ENCODE measurements at regions of chr6 and their contacts with region 1.

Region 1: DNA sequence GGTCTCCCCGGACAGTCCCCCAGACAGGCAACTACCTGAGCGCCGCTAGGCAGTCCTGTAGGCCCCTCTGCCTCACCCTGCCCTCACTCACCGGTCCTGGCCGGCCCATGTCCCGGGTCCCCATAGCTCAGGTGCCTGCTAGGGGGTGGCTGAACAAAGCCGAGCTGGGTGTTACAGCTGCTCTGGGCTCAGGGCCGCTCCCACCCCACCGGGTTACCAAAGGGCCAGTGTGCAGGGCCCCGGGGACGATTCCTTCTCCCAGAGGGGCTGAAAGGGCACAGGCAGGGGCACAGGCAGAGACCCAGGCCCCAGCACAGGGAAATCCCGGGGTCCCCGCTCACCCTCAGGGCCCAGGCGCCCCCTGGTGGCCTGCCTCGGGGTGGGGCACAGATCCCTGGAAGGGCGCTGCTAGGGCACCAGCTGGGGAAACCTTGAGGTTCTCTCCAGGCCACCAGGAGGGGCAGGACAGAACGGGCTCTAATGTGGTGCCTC is 118.4 kb downstream of the GRM4 start:
- DNase-seq: peak; percentile 29 to 84 (median 64)
- ATAC-seq: peak; percentile 66
- H3K4me3 ChIP-seq: no peak overlapping the region
- H3K4me3 Mint-ChIP-seq: no peak overlapping the region
- H3K27ac ChIP-seq: no peak overlapping the region
- H3K27ac Mint-ChIP-seq: no peak overlapping the region
- H3K4me1 ChIP-seq: no peaks in the 10 kb centered on the region
- H3K4me1 Mint-ChIP-seq: no peaks in the 10 kb centered on the region
- H3K27me3 ChIP-seq: no peaks in the 10 kb centered on the region
- H3K27me3 Mint-ChIP-seq: peaks cover 5% of the 10 kb centered on the region
- CTCF ChIP-seq: peak; percentile 82

Region 2: DNA sequence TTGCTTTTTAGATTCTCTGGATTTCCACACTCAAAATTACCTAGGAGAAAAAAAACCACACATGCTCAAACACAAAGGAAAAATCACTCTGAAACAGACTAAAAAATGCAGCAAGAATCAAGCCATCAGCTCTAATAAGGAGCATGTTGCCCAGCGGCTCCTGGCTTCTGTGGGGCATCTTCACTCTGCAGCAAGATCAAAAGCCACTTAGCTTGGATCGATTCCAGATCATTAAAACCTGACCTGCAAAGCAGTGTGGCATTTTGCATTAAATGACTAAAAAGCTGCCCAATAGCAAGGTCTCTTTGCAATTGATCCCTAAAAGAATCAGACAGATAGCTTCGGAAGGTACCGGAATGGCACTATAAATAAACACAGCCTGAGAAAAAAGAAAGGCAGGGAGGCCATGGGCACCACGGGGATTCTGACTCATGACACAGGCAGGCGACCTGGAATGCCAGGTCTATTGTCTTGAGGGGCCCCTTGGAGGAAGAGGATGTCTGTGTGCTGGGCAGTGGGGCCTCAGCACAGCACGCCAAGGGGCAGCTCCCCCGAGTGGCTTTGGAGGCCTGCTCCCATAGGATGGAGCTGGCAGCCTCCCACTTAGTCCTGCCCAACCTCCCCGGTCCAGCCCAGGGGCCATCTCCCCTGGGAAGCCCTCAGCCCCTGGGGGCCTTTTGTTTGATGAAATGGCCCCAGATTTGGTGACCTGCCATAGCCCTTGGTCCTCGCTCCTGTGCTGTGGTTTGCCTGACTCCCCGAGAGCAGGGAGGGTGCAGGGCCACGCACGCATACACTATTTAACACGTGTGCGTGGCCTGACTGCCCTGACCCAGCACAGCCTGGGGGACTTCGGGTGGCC is 246.1 kb before region 1 on chr6:
- CTCF ChIA-PET with region 1: interaction called, 21 read pairs
- POLR2A ChIA-PET with region 1: no interaction called
- intact Hi-C with region 1: loop called in 1 of 2 experiments (anchors 5 kb)
- DNase-seq: no peak
- ATAC-seq: no peak
- H3K4me3 ChIP-seq: no peak overlapping the region
- H3K4me3 Mint-ChIP-seq: no peak overlapping the region
- H3K27ac ChIP-seq: no peak overlapping the region
- H3K27ac Mint-ChIP-seq: no peak overlapping the region
- H3K4me1 ChIP-seq: peaks cover 19% of the 10 kb centered on the region
- H3K4me1 Mint-ChIP-seq: peaks cover 37% of the 10 kb centered on the region
- H3K27me3 ChIP-seq: no peaks in the 10 kb centered on the region
- H3K27me3 Mint-ChIP-seq: no peaks in the 10 kb centered on the region
- CTCF ChIP-seq: no peak

Region 3: DNA sequence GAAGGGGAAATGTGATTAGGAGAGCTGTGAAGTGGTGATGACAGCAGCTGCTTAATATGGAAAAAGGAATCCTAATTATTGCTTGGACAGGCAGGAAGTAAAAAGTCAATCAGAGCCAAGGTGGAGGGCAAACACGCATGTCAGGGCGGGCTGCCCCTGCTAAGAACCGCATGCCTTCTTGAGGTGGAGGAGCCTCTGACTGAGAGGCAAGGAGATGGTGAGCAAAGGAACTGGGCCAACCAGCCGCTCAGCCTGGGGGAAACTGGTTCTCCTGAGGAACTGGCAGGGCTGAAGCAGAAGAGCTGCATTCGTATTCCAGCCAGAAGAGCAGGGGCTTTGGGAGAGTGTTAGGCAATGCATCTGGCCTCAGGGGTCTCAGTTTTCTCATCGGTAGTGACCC is 210.6 kb before region 1 on chr6:
- CTCF ChIA-PET with region 1: no interaction called
- POLR2A ChIA-PET with region 1: no interaction called
- intact Hi-C with region 1: no loop called
- DNase-seq: no peak
- ATAC-seq: no peak
- H3K4me3 ChIP-seq: no peak overlapping the region
- H3K4me3 Mint-ChIP-seq: no peak overlapping the region
- H3K27ac ChIP-seq: no peak overlapping the region
- H3K27ac Mint-ChIP-seq: no peak overlapping the region
- H3K4me1 ChIP-seq: peaks cover 7% of the 10 kb centered on the region
- H3K4me1 Mint-ChIP-seq: peaks cover 7% of the 10 kb centered on the region
- H3K27me3 ChIP-seq: peaks cover 12 to 16% of the 10 kb centered on the region in 2 experiments
- H3K27me3 Mint-ChIP-seq: peaks cover 21% of the 10 kb centered on the region
- CTCF ChIP-seq: no peak

Region 4: DNA sequence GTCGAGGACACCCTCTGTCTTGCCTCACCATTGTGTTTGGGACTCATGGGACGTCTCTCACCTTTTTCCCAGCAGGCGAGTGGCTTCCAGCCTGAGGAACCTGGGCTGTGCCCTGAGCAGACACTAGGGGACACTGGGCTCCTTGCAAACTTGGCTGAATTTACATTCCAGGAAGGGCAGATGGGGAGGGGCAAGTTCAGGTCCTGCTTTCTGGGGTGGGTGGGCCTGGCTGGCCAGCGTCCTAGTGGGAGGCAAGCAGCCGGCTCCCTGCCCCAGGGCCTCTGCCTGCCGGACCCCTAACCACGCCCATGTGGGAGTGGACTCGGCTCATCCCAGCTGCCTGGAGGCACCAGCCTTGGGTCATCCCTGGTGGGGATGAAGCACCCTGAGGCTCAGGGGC is 175.5 kb before region 1 on chr6:
- CTCF ChIA-PET with region 1: interaction called, 52 read pairs
- POLR2A ChIA-PET with region 1: no interaction called
- intact Hi-C with region 1: loop called in 1 of 2 experiments (anchors 1 kb)
- DNase-seq: peak in 4 of 9 experiments; percentile 26 to 58 (median 41)
- ATAC-seq: no peak
- H3K4me3 ChIP-seq: no peak overlapping the region
- H3K4me3 Mint-ChIP-seq: no peak overlapping the region
- H3K27ac ChIP-seq: no peak overlapping the region
- H3K27ac Mint-ChIP-seq: no peak overlapping the region
- H3K4me1 ChIP-seq: peaks cover 24% of the 10 kb centered on the region
- H3K4me1 Mint-ChIP-seq: peaks cover 20% of the 10 kb centered on the region
- H3K27me3 ChIP-seq: peaks cover 0 to 17% of the 10 kb centered on the region in 2 experiments
- H3K27me3 Mint-ChIP-seq: peaks cover 17% of the 10 kb centered on the region
- CTCF ChIP-seq: no peak

Region 5: GRCh38 chr6:33860706-33861474 is 166.6 kb before region 1 on chr6:
- CTCF ChIA-PET with region 1: interaction called, 21 read pairs
- POLR2A ChIA-PET with region 1: interaction called, 3 read pairs
- intact Hi-C with region 1: no loop called
- DNase-seq: peak in 5 of 9 experiments; percentile 16 to 62 (median 41)
- ATAC-seq: peak; percentile 27
- H3K4me3 ChIP-seq: no peak overlapping the region
- H3K4me3 Mint-ChIP-seq: peak overlapping the region; percentile 21
- H3K27ac ChIP-seq: no peak overlapping the region
- H3K27ac Mint-ChIP-seq: no peak overlapping the region
- H3K4me1 ChIP-seq: peaks cover 57% of the 10 kb centered on the region
- H3K4me1 Mint-ChIP-seq: peaks cover 71% of the 10 kb centered on the region
- H3K27me3 ChIP-seq: peaks cover 0 to 23% of the 10 kb centered on the region in 2 experiments
- H3K27me3 Mint-ChIP-seq: peaks cover 8% of the 10 kb centered on the region
- CTCF ChIP-seq: no peak

Region 6: GRCh38 chr6:34791701-34792235 is 764.3 kb after region 1 on chr6 and contains the start of gene BLTP3A:
- CTCF ChIA-PET with region 1: no interaction called
- POLR2A ChIA-PET with region 1: no interaction called
- intact Hi-C with region 1: no loop called
- DNase-seq: peak; percentile 48 to 91 (median 71)
- ATAC-seq: peak; percentile 90
- H3K4me3 ChIP-seq: peak within 1 kb of the TSS; percentile 75 to 95
- H3K4me3 Mint-ChIP-seq: peak within 1 kb of the TSS; percentile 99
- H3K27ac ChIP-seq: peak within 1 kb of the TSS; percentile 75 to 79
- H3K27ac Mint-ChIP-seq: peak within 1 kb of the TSS; percentile 94
- H3K4me1 ChIP-seq: peaks cover 12% of the 10 kb centered on the region
- H3K4me1 Mint-ChIP-seq: peaks cover 29% of the 10 kb centered on the region
- H3K27me3 ChIP-seq: no peaks in the 10 kb centered on the region
- H3K27me3 Mint-ChIP-seq: no peaks in the 10 kb centered on the region
- CTCF ChIP-seq: no peak
- total RNA-seq, gene BLTP3A: 8.8 to 9.3 TPM